Posterior cingulate gyrus (tissue), 11 donors: ENCODE measurements at regions of chrX and their contacts with region 1.

Region 1: GRCh38 chrX:4850312-4850711 is 1136.9 kb upstream of the PRKX start:
- DNase-seq: peak in 4 of 10 donors; percentile 3 to 84 (median 32)

Region 2: GRCh38 chrX:3763111-3763510 is 1087.2 kb before region 1 on chrX:
- intact Hi-C with region 1: no loop called
- DNase-seq: no peak

Region 3: GRCh38 chrX:3806630-3807029 is 1043.7 kb before region 1 on chrX:
- intact Hi-C with region 1: no loop called
- DNase-seq: no peak

Region 4: DNA sequence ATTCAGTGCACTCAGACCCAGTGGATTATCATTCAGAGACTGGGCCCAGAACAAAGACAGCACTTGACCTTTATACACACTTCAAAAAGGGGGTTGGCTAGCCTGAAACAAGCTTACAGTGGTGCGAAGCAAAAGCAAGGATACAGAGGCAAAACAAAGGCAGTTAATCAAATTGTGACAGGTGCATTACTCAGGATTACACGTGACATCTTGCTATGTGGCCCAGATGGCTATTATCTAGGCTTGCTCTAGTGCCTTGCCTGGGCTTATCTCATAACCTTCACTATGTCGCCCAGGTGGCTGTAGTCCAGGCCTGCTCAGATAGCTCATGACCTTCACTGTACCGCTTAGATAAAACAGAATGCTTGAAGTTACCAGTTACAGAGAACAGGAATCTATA is 44.8 kb before region 1 on chrX:
- intact Hi-C with region 1: no loop called
- DNase-seq: no peak

Region 5: GRCh38 chrX:5617666-5618065 is 767.4 kb after region 1 on chrX:
- intact Hi-C with region 1: loop called (anchors 5 kb)
- DNase-seq: peak in 2 of 10 donors; percentile 8 to 30